Activated naive CD4-positive, alpha-beta T cell treated with anti-CD3 and anti-CD28 coated beads for 36 hours (primary cell): ENCODE measurements at regions of chr6 and their contacts with region 1.

Region 1: DNA sequence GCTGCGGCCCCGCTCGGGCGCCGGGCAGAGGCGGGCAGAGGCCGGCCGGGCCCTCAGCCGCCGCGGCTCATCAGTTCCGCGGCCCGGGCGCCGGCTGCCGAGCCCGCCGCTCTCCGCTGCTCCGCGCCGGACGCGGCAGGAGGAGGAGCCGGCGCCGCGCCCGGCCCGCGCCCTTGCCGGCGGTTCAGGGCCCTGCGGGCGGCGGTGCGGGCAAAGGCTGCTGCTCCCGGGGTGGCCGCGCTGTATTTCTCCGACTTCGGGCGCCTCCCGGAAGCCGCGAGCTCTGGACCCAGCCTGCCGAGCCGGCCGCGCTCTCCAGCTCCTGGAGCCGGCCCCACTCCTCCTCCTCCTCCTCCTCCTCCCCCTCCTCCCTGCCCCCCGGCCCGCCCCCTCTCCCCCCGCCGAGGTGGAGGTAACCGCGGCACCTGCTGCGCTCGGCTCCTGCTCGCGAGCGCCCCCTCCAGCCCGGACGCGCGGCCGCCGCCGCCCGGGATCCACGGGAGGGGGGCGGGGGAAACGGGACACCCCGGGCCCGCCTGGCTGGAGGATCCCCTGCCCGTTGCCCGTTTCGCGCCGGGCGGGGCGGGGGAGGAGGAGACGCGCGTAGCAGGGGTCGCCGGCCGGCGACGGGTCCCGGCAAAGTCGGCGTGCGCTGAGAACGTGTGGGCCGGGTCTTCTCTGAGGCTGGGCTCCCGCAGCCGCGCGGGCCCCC is at the start of gene SLC22A23:
- DNase-seq: peak; percentile 76
- H3K4me3 Mint-ChIP-seq: peak within 1 kb of the TSS; percentile 74
- H3K27ac Mint-ChIP-seq: no peak within 1 kb of the TSS
- H3K4me1 Mint-ChIP-seq: peaks cover 10% of the 10 kb centered on the region
- H3K27me3 Mint-ChIP-seq: peaks cover 8% of the 10 kb centered on the region
- total RNA-seq, gene SLC22A23: 1.3 to 1.4 TPM

Region 2: GRCh38 chr6:2988426-2989331 is 468.2 kb before region 1 on chr6:
- CTCF ChIA-PET with region 1: no interaction called
- intact Hi-C with region 1: loop called (anchors 10 kb)
- DNase-seq: peak; percentile 84
- H3K4me3 Mint-ChIP-seq: peak overlapping the region; percentile 87
- H3K27ac Mint-ChIP-seq: peak overlapping the region; percentile 97
- H3K4me1 Mint-ChIP-seq: peaks cover 12% of the 10 kb centered on the region
- H3K27me3 Mint-ChIP-seq: no peaks in the 10 kb centered on the region

Region 3: DNA sequence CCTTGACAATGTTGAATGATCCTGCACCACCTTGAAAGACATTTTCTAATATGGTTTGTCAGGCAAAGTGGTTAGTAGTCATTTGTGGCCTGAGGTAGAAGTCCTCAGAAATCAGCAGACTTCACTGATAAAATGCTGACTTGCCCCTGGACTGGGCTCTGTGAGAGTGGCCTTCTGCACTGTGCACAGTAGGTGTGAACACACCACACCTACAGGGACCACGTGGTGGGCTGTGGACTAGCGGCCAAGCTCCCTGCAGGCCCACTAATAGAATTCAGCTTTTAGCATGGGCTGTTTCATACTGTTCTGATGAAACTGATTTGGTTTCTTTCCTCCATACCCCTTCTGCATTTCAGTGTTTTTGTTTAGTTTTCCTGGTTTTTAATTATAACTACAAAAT is 331.1 kb before region 1 on chr6:
- CTCF ChIA-PET with region 1: interaction called, 3 read pairs
- intact Hi-C with region 1: loop called (anchors 5 kb)
- DNase-seq: no peak
- H3K4me3 Mint-ChIP-seq: no peak overlapping the region
- H3K27ac Mint-ChIP-seq: no peak overlapping the region
- H3K4me1 Mint-ChIP-seq: peaks cover 7% of the 10 kb centered on the region
- H3K27me3 Mint-ChIP-seq: no peaks in the 10 kb centered on the region

Region 4: GRCh38 chr6:3281631-3282475 is 175.1 kb before region 1 on chr6:
- CTCF ChIA-PET with region 1: no interaction called
- intact Hi-C with region 1: loop called (anchors 1 kb)
- DNase-seq: no peak
- H3K4me3 Mint-ChIP-seq: no peak overlapping the region
- H3K27ac Mint-ChIP-seq: no peak overlapping the region
- H3K4me1 Mint-ChIP-seq: peaks cover 2% of the 10 kb centered on the region
- H3K27me3 Mint-ChIP-seq: no peaks in the 10 kb centered on the region

Region 5: DNA sequence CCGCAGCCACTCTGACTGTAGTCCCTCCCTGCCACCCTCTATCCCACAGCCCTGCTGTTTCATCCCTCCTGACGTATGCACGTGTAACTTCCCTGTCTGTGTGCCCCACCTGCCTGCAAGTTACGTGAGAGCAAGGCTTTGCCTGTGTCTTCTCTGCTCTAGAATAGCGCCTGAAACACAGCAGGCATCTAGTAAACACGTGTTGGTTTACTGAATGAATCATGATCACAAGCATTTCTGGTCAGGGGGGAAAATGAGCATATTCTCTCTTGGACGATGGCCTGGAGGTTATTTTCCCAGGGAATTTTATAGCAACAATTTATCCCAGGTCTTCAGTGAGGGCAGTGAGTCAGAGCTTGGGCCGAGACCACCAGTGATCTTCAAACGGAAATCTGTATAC is 159.9 kb before region 1 on chr6:
- CTCF ChIA-PET with region 1: no interaction called
- intact Hi-C with region 1: no loop called
- DNase-seq: no peak
- H3K4me3 Mint-ChIP-seq: no peak overlapping the region
- H3K27ac Mint-ChIP-seq: no peak overlapping the region
- H3K4me1 Mint-ChIP-seq: no peaks in the 10 kb centered on the region
- H3K27me3 Mint-ChIP-seq: no peaks in the 10 kb centered on the region

Region 6: GRCh38 chr6:3356056-3356761 is 100.7 kb before region 1 on chr6:
- CTCF ChIA-PET with region 1: no interaction called
- intact Hi-C with region 1: loop called (anchors 2 kb)
- DNase-seq: peak; percentile 68
- H3K4me3 Mint-ChIP-seq: peak overlapping the region; percentile 63
- H3K27ac Mint-ChIP-seq: peak overlapping the region; percentile 15
- H3K4me1 Mint-ChIP-seq: peaks cover 25% of the 10 kb centered on the region
- H3K27me3 Mint-ChIP-seq: no peaks in the 10 kb centered on the region

Region 7: DNA sequence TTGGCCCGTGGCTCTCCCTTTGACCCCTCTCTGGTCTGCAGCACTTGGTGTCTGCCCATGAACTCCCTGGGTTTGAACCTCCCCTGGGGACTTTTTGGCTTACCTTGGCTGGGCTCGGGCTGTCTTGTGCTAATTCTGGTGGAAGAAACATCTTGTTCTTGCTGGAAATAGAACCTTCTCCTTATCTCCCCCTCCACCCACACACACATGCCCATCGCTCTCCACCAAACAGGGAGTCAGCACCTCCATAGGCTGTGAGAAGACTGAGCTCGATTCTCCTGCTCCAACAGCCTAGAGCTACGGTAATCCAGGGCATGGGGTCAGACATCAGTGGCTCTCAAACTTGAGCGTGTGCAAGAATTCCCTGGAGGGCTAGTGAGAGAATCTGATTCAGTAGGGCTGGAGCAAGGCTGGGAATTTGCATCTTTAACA is 114.4 kb after region 1 on chr6:
- CTCF ChIA-PET with region 1: no interaction called
- intact Hi-C with region 1: no loop called
- DNase-seq: no peak
- H3K4me3 Mint-ChIP-seq: no peak overlapping the region
- H3K27ac Mint-ChIP-seq: no peak overlapping the region
- H3K4me1 Mint-ChIP-seq: no peaks in the 10 kb centered on the region
- H3K27me3 Mint-ChIP-seq: no peaks in the 10 kb centered on the region

Region 8: GRCh38 chr6:3732345-3733141 is 275.6 kb after region 1 on chr6:
- CTCF ChIA-PET with region 1: interaction called, 3 read pairs
- intact Hi-C with region 1: loop called (anchors 5 kb)
- DNase-seq: peak; percentile 75
- H3K4me3 Mint-ChIP-seq: no peak overlapping the region
- H3K27ac Mint-ChIP-seq: no peak overlapping the region
- H3K4me1 Mint-ChIP-seq: peaks cover 2% of the 10 kb centered on the region
- H3K27me3 Mint-ChIP-seq: peaks cover 3% of the 10 kb centered on the region

Region 9: DNA sequence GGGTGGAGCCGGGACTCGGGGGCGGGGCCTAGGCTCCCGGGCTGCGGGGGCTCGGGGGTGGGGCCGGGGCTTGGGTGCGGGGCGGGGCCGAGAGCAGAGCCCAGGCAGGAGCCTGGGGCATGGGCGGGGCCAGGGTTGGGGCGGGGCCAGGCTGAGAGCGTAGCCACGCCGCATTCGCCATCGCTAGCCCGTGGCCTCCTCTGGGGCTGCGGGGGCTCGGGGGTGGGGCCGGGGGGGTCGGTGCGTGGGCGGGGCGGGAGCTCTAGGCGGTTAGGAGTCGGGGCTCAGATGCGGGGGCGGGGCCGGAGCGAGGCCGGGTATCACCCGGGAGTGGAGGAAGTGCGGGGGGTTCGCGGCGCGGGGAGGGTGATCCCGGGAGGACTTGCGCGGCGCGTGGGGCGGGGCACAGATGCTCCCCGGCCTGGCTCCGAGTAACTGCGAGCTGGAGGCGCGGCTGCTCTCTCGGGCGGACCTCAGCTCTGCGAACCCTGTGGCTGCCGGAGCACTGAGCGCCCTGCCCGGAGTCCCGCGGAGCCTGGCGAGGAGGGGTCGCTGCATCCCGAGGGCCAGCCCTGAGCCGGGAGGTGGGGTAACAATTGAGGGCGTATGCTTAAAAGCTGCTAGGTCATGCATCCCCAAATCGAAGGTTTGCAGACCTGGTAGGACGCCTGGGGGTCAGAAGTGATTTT is 678.9 kb after region 1 on chr6:
- CTCF ChIA-PET with region 1: no interaction called
- intact Hi-C with region 1: loop called (anchors 2 kb)
- DNase-seq: peak; percentile 92
- H3K4me3 Mint-ChIP-seq: peak overlapping the region; percentile 81
- H3K27ac Mint-ChIP-seq: peak overlapping the region; percentile 65
- H3K4me1 Mint-ChIP-seq: peaks cover 40% of the 10 kb centered on the region
- H3K27me3 Mint-ChIP-seq: no peaks in the 10 kb centered on the region